AG04450 (cell line): ENCODE measurements at regions of chr2 and their contacts with region 1.

Region 1: GRCh38 chr2:207091176-207091575 is 74.6 kb downstream of the KLF7 start:
- DNase-seq: no peak
- H3K4me3 ChIP-seq: no peak overlapping the region
- H3K27ac ChIP-seq: no peak overlapping the region
- H3K27me3 ChIP-seq: no peaks in the 10 kb centered on the region
- CTCF ChIP-seq: no peak

Region 2: GRCh38 chr2:207073801-207074678 is 17.1 kb before region 1 on chr2:
- CTCF ChIA-PET with region 1: no interaction called
- POLR2A ChIA-PET with region 1: interaction called, 12 read pairs
- DNase-seq: no peak
- H3K4me3 ChIP-seq: no peak overlapping the region
- H3K27ac ChIP-seq: no peak overlapping the region
- H3K27me3 ChIP-seq: no peaks in the 10 kb centered on the region
- CTCF ChIP-seq: no peak